ENCODE measurements at regions of chr22 and their contacts with region 1.

Region 1: DNA sequence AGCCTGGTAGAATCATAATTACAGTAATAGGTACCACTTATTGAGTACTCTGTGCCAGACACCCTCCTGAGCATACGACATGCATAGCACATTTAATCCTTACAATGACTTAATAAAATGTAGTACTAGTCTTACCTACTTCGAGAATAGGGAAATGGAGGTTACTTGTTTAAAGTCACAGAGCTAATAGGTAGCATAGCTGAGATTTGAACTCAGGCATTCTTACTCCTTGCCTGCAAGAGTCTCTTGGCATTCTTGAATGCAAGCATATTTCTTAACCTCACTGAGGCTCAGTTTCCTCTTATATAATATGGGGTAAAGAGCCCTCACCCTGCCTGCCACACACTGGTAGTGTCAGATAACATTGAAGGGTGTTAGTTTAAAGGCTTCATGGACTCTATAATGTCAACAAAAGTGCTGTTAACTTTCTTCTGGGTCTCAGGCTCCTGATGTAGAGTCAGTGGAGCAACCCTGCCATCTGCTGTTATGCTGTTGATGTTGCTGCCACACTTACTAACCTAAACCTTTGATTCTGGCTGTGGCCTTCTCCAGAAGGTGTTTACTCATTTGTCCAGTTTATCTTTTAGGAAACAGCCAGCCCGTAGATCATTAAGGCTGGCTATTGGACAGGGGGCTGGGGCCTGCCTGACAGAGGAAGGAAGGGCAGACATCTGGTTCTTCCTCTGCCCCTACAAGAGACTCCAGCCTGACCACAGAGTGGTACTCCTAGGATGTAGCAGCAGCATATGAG is 18.9 kb downstream of the LIMK2 start:
- DNase-seq: peak; percentile 55
- H3K4me3 Mint-ChIP-seq: no peak overlapping the region
- H3K27ac Mint-ChIP-seq: peak overlapping the region; percentile 87
- H3K4me1 Mint-ChIP-seq: peaks cover 56% of the 10 kb centered on the region
- H3K27me3 Mint-ChIP-seq: no peaks in the 10 kb centered on the region

Region 2: GRCh38 chr22:31107178-31107893 is 123.7 kb before region 1 on chr22 and contains the start of gene SELENOM:
- CTCF ChIA-PET with region 1: interaction called, 28 read pairs
- POLR2A ChIA-PET with region 1: no interaction called
- DNase-seq: peak; percentile 91
- H3K4me3 Mint-ChIP-seq: peak within 1 kb of the TSS; percentile 79
- H3K27ac Mint-ChIP-seq: peak within 1 kb of the TSS; percentile 1
- H3K4me1 Mint-ChIP-seq: peaks cover 15% of the 10 kb centered on the region
- H3K27me3 Mint-ChIP-seq: no peaks in the 10 kb centered on the region
- total RNA-seq, gene SELENOM: 2.3 to 2.4 TPM

Region 3: DNA sequence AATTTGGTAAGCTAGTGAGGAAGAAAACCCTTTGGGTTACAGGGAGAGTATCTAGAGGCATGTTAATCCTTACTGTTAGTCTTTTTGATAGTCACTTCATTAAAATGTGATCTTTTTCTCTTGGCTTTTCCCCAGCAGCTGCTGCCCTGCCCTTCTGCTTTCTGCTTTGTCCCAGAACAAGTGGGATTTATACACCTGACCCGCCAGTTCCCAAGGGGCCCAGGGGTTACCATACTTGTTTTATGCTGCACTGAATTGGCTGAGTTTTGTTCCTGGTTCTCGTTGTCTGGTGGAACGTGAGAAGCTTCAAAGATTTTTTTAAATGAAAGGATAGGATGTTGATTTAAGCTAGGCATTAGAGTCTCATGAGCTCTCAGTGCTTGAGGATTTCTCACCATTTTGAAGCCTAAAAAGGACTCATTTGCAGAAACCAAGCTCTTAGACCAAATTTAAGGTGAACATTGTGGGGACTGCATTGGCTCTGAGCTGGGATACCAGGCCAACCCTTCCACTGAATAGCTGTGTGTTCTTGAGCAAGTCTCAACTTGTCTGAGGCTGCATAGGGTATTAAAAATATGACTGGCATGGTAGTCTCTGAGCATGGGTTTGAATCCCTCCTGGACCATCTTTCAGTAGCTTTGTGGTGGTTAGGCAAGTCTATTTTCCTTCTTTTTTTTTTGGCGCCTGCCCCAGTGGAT is 12.3 kb before region 1 on chr22:
- CTCF ChIA-PET with region 1: interaction called, 110 read pairs
- POLR2A ChIA-PET with region 1: interaction called, 11 read pairs
- DNase-seq: no peak
- H3K4me3 Mint-ChIP-seq: no peak overlapping the region
- H3K27ac Mint-ChIP-seq: no peak overlapping the region
- H3K4me1 Mint-ChIP-seq: peaks cover 61% of the 10 kb centered on the region
- H3K27me3 Mint-ChIP-seq: no peaks in the 10 kb centered on the region